ENCODE measurements at regions of chr13 and their contacts with region 1.

Region 1: GRCh38 chr13:78241278-78241919 is 322.8 kb upstream of the EDNRB start:
- DNase-seq: peak; percentile 17 to 72
- H3K4me3 ChIP-seq: no peak overlapping the region
- H3K27ac ChIP-seq: no peak overlapping the region
- H3K4me1 ChIP-seq: no peaks in the 10 kb centered on the region; a peak in 1 of 7 replicates
- H3K27me3 ChIP-seq: no peaks in the 10 kb centered on the region
- CTCF ChIP-seq: peak; percentile 66 to 86 (median 76)
- EP300 ChIP-seq: no peak
- POLR2A ChIP-seq: no peak
- RAD21 ChIP-seq: peak; percentile 93 to 95

Region 2: DNA sequence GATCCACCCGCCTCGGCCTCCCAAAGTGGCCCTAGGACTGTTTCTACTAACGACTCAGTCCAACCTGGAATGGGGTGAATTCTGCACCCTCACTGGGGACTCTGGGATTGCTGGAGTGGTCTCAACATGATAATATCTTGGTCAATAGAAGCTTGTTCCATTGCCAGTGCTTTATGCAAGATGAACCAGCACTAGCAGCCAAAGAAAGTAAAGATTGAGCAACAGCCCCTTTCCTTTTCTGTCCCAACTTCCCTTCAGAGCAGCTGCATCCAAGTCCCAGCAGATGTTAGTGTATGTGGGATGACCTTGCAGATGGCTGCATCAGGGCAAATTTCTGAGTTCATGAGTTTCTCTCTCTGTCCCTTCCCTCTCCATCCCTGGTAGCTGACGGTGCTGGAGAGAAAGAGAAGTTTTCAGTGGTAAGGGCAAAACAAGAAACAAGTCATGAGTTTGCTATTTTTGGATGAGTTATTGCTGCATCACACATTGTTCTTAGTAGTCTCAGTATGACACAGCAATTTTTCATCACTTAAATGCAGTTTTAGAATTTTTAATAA is 139.2 kb before region 1 on chr13:
- CTCF ChIA-PET with region 1: no interaction called
- POLR2A ChIA-PET with region 1: no interaction called
- DNase-seq: no peak
- H3K4me3 ChIP-seq: no peak overlapping the region
- H3K27ac ChIP-seq: no peak overlapping the region
- H3K4me1 ChIP-seq: no peaks in the 10 kb centered on the region
- H3K27me3 ChIP-seq: peaks cover 0 to 1% (median 0%) of the 10 kb centered on the region in 4 experiments; a peak in 1 of 7 replicates
- CTCF ChIP-seq: no peak
- EP300 ChIP-seq: no peak
- POLR2A ChIP-seq: no peak
- RAD21 ChIP-seq: no peak

Region 3: DNA sequence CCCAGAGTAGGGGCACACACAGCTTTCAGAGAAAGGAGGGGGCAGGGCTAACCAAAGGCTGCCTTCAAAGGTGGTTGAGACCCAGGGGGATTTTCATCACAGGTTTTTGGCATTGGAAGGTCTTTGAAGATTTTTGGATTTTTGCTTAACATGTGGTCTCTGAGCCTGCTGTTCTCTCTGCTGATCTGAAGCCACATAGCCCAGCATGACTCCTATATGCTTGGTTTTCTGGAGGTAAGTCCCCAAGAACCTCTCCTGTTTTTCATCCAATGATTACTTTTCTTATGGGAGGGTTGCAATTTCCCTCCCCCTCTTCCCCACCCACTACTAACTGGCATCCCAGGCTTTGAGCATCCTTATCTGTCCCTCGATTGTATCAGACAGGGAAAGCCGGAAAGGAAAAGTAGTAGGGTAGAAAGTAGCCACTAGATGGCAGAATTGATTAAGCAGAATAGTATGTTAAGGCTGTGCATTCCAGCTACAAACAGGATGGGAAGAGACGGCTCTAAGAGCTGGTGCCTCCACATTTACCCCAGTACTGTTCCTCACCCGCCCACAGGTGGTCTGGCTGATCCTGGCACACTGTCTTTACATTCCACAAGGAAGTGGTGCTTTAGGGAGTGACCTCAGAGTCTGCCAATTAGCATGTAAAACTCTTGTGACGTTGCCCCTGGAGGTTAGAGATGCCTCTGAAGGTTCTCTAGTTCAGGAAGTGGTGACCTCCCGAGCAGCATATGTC is 103.8 kb before region 1 on chr13:
- CTCF ChIA-PET with region 1: interaction called, 19 read pairs
- POLR2A ChIA-PET with region 1: no interaction called
- DNase-seq: peak; percentile 33 to 57
- H3K4me3 ChIP-seq: no peak overlapping the region
- H3K27ac ChIP-seq: no peak overlapping the region
- H3K4me1 ChIP-seq: peaks cover 0 to 5% (median under 1%) of the 10 kb centered on the region in 4 experiments; a peak in 1 of 7 replicates
- H3K27me3 ChIP-seq: no peaks in the 10 kb centered on the region
- CTCF ChIP-seq: peak in 2 of 3 experiments; percentile 58 to 74; a peak in 2 of 4 replicates
- EP300 ChIP-seq: no peak
- POLR2A ChIP-seq: no peak
- RAD21 ChIP-seq: peak; percentile 89 to 91

Region 4: GRCh38 chr13:78228940-78229339 is 12.5 kb before region 1 on chr13:
- CTCF ChIA-PET with region 1: interaction called, 10 read pairs
- POLR2A ChIA-PET with region 1: no interaction called
- DNase-seq: no peak
- H3K4me3 ChIP-seq: no peak overlapping the region
- H3K27ac ChIP-seq: no peak overlapping the region
- H3K4me1 ChIP-seq: no peaks in the 10 kb centered on the region
- H3K27me3 ChIP-seq: peaks cover 0 to 1% (median 0%) of the 10 kb centered on the region in 4 experiments; a peak in 1 of 7 replicates
- CTCF ChIP-seq: no peak
- EP300 ChIP-seq: no peak
- POLR2A ChIP-seq: no peak
- RAD21 ChIP-seq: no peak

Region 5: GRCh38 chr13:78254113-78254512 is 12.7 kb after region 1 on chr13:
- CTCF ChIA-PET with region 1: interaction called, 24 read pairs
- POLR2A ChIA-PET with region 1: no interaction called
- DNase-seq: no peak
- H3K4me3 ChIP-seq: no peak overlapping the region
- H3K27ac ChIP-seq: no peak overlapping the region
- H3K4me1 ChIP-seq: peaks cover 0 to 2% (median 0%) of the 10 kb centered on the region in 4 experiments; a peak in 1 of 7 replicates
- H3K27me3 ChIP-seq: no peaks in the 10 kb centered on the region
- CTCF ChIP-seq: no peak
- EP300 ChIP-seq: no peak
- POLR2A ChIP-seq: no peak
- RAD21 ChIP-seq: no peak

Region 6: DNA sequence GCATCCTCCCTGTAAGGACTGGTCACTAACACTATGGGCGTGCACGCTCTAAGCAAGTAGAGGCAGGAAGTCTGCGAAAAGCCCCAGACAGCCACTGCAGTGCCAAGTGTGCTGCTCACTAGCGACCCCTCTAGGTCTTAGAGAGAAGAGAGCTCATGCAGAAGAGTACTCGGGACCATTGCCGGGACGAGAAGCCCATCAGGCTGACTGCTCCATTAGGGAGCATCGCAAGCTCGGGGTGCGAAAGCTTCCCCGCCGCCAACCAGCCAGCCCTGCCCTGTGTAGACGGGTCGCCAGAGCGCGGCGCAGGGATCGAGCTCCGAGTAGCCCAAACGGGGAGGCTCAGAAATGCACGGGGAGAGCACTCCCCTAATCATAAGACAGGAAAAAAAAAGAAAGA is 345.3 kb after region 1 on chr13:
- CTCF ChIA-PET with region 1: interaction called, 21 read pairs
- POLR2A ChIA-PET with region 1: no interaction called
- DNase-seq: peak in 1 of 2 experiments; percentile 79
- H3K4me3 ChIP-seq: peak overlapping the region in 1 of 4 experiments; percentile 41; a peak in 2 of 8 replicates
- H3K27ac ChIP-seq: no peak overlapping the region
- H3K4me1 ChIP-seq: peaks cover 0 to 7% (median 2%) of the 10 kb centered on the region in 4 experiments; a peak in 3 of 7 replicates
- H3K27me3 ChIP-seq: peaks cover 14 to 40% (median 26%) of the 10 kb centered on the region in 4 experiments
- CTCF ChIP-seq: peak; percentile 84 to 95 (median 85)
- EP300 ChIP-seq: no peak
- POLR2A ChIP-seq: no peak
- RAD21 ChIP-seq: peak; percentile 85 to 87

Measured in H1 (cell line).